H1 (cell line): ENCODE measurements at regions of chr13 and their contacts with region 1.

Region 1: GRCh38 chr13:38624822-38625221 is 62.1 kb upstream of the FREM2 start:
- DNase-seq: peak; percentile 41 to 51
- H3K4me3 ChIP-seq: peak overlapping the region; percentile 8 to 52 (median 15); a peak in 5 of 8 replicates
- H3K27ac ChIP-seq: peak overlapping the region; percentile 86; the same call in 1 of the 2 replicates
- H3K4me1 ChIP-seq: peaks cover 0 to 12% (median 4%) of the 10 kb centered on the region in 4 experiments; a peak in 4 of 7 replicates
- H3K27me3 ChIP-seq: no peaks in the 10 kb centered on the region
- CTCF ChIP-seq: no peak
- EP300 ChIP-seq: 0 out of 3 replicates have a peak, but pooled peaks of 1 of the 2 experiments have one; percentile 13
- POLR2A ChIP-seq: peak; percentile 29 to 76
- RAD21 ChIP-seq: no peak

Region 2: DNA sequence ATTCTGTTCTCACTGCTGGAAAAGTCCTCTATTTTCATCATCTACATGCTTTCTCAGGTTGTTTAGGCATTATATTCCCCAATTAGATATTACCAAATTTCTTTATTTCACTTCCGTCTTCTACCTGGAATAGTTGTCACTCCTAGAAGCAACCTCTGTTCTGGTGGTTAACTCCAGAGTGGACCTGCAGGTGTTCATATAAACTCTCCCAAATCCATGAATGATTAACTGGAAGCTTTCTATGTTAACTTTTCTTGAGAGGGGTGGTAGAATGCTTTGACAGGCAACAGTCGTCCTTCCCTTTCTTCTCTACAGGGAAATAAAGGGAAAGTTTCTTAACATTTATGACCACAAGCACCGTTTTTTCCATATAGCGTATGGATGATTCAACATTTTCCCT is 323.6 kb before region 1 on chr13:
- CTCF ChIA-PET with region 1: no interaction called
- POLR2A ChIA-PET with region 1: no interaction called
- DNase-seq: no peak
- H3K4me3 ChIP-seq: no peak overlapping the region
- H3K27ac ChIP-seq: no peak overlapping the region
- H3K4me1 ChIP-seq: no peaks in the 10 kb centered on the region
- H3K27me3 ChIP-seq: no peaks in the 10 kb centered on the region
- CTCF ChIP-seq: no peak
- EP300 ChIP-seq: no peak
- POLR2A ChIP-seq: no peak
- RAD21 ChIP-seq: no peak

Region 3: DNA sequence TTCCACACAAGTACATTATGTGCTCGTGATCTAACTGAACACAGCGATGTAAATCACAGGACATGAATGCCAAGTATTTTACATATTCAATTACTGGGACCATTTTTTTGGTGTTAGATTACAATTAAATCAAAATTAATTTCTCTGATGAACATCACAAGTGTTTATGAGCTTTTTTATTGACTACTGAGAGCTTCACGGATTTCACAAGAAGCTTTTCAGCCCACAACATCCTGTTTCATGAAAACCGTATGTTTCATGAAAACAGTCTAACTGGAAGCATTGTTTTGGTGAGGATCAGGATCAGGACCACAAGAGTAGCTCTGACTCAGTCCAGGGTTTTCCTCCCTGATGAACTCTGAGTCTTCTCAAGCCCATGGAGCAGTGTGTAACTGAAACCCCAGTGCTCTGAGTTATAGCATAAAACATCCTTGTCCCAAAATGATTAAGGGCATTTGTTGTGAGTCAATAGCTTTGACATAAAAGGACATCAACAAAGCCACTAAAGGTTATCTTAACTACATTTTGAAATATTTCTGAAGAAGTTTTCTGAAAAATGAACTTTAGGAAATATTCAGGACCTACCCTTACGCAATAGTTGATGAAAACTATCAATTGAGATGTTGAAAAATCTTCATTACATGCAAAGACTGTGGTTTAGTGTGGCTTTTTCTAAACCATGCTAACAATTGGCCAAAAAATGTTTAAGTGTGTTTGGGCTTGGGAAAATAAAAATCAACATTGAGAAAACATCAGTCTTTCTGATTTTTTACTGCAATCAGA is 225.9 kb before region 1 on chr13:
- CTCF ChIA-PET with region 1: no interaction called
- POLR2A ChIA-PET with region 1: no interaction called
- DNase-seq: no peak
- H3K4me3 ChIP-seq: no peak overlapping the region
- H3K27ac ChIP-seq: no peak overlapping the region
- H3K4me1 ChIP-seq: no peaks in the 10 kb centered on the region
- H3K27me3 ChIP-seq: peaks cover 0 to 1% (median 0%) of the 10 kb centered on the region in 4 experiments; a peak in 1 of 7 replicates
- CTCF ChIP-seq: no peak
- EP300 ChIP-seq: no peak
- POLR2A ChIP-seq: no peak
- RAD21 ChIP-seq: no peak

Region 4: GRCh38 chr13:38590796-38591507 is 33.9 kb before region 1 on chr13:
- CTCF ChIA-PET with region 1: no interaction called
- POLR2A ChIA-PET with region 1: no interaction called
- DNase-seq: no peak
- H3K4me3 ChIP-seq: no peak overlapping the region
- H3K27ac ChIP-seq: no peak overlapping the region
- H3K4me1 ChIP-seq: no peaks in the 10 kb centered on the region
- H3K27me3 ChIP-seq: no peaks in the 10 kb centered on the region
- CTCF ChIP-seq: no peak
- EP300 ChIP-seq: no peak
- POLR2A ChIP-seq: no peak
- RAD21 ChIP-seq: no peak

Region 5: GRCh38 chr13:38636772-38637171 is 11.9 kb after region 1 on chr13:
- CTCF ChIA-PET with region 1: interaction called, 11 read pairs
- POLR2A ChIA-PET with region 1: no interaction called
- DNase-seq: no peak
- H3K4me3 ChIP-seq: no peak overlapping the region
- H3K27ac ChIP-seq: no peak overlapping the region
- H3K4me1 ChIP-seq: no peaks in the 10 kb centered on the region; a peak in 1 of 7 replicates
- H3K27me3 ChIP-seq: no peaks in the 10 kb centered on the region
- CTCF ChIP-seq: no peak
- EP300 ChIP-seq: no peak
- POLR2A ChIP-seq: no peak
- RAD21 ChIP-seq: no peak

Region 6: DNA sequence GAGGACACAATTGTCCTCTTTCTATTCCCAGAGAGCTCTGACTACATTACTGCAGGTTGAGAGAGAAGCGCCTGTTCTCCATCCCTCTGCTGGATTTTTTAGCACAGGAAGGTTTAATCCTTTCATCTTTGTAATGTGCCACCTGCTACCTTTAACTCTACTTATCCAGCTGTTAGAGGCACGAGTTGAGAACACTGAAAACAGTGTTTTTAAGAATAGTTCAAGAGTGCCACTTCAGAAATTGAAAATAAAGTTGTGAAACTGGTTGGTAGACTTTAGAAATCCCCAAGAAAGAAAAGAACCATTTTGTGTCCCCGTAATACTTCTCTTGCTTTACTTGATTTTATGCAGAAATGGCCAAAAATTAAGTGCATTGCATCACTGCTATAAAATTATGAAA is 82.6 kb after region 1 on chr13:
- CTCF ChIA-PET with region 1: no interaction called
- POLR2A ChIA-PET with region 1: no interaction called
- DNase-seq: no peak
- H3K4me3 ChIP-seq: no peak overlapping the region
- H3K27ac ChIP-seq: no peak overlapping the region
- H3K4me1 ChIP-seq: no peaks in the 10 kb centered on the region; a peak in 1 of 7 replicates
- H3K27me3 ChIP-seq: no peaks in the 10 kb centered on the region
- CTCF ChIP-seq: no peak
- EP300 ChIP-seq: no peak
- POLR2A ChIP-seq: no peak
- RAD21 ChIP-seq: no peak